ENCODE measurements at regions of chr1 and their contacts with region 1.

Region 1: DNA sequence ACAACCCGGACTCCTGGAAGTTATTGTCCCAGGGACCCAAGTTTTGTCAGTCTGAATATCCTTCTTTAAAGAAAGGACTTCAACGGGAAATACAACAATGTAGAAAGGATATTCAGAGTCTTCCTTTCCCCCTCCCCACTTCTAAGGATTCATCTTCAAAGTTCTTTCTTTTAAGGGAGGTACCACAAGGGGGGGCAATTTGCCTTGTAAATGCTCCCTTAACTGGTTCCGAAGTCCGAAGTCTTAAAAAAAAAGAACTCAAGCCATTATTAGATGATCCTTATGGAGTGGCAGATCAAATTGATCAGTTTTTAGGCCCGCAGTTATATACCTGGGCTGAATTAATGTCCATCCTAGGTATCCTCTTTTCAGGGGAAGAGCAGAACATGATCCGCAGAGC is 47.0 kb downstream of the SERINC2 start:
- DNase-seq: no peak
- H3K4me3 ChIP-seq: no peak overlapping the region
- H3K27ac ChIP-seq: no peak overlapping the region
- H3K4me1 ChIP-seq: no peaks in the 10 kb centered on the region
- H3K27me3 ChIP-seq: peaks cover 56% of the 10 kb centered on the region
- CTCF ChIP-seq: no peak

Region 2: GRCh38 chr1:31548907-31549808 is 89.1 kb after region 1 on chr1:
- intact Hi-C with region 1: loop called (anchors 5 kb)
- DNase-seq: peak; percentile 77
- H3K4me3 ChIP-seq: peak overlapping the region; percentile 41
- H3K27ac ChIP-seq: peak overlapping the region; percentile 57
- H3K4me1 ChIP-seq: peaks cover 19% of the 10 kb centered on the region
- H3K27me3 ChIP-seq: peaks cover 11% of the 10 kb centered on the region
- CTCF ChIP-seq: peak; percentile 96